Dendritic cell treated with granulocyte-macrophage colony-stimulating factor and Interleukin-4, amounts not matched to agents 40 ng/mL and 50 ng/mL, for 4 days (primary cell): ENCODE measurements at regions of chr9 and their contacts with region 1.

Region 1: GRCh38 chr9:93108291-93109041 is 12.4 kb downstream of the CARD19 start:
- H3K4me3 Mint-ChIP-seq: no peak overlapping the region
- H3K27ac Mint-ChIP-seq: peak overlapping the region; percentile 90
- H3K4me1 Mint-ChIP-seq: peaks cover 86% of the 10 kb centered on the region
- H3K27me3 Mint-ChIP-seq: no peaks in the 10 kb centered on the region

Region 2: DNA sequence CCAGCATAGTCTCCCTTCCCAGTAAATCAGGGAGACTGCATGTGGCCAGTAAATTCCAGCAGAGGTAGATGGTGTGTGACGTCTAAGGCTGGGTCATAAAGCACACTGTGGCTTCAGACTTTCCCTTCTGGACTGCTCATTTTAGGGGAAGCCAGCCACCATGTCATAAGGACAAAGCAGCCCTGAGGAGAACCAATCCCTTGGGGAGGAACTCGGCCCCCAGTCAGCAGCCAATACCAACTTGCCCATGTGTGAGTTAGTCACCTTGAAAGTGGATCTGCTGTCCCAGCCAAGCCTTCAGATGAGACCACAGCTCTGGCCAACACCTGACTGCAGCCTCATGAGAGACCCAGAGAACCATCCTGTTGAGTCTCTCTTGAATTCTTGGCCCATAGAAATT is 40.3 kb after region 1 on chr9:
- intact Hi-C with region 1: loop called (anchors 2 kb)
- H3K4me3 Mint-ChIP-seq: no peak overlapping the region
- H3K27ac Mint-ChIP-seq: peak overlapping the region; percentile 81
- H3K4me1 Mint-ChIP-seq: peaks cover 41% of the 10 kb centered on the region
- H3K27me3 Mint-ChIP-seq: peaks cover 7% of the 10 kb centered on the region

Region 3: GRCh38 chr9:93276968-93277367 is 168.5 kb after region 1 on chr9:
- intact Hi-C with region 1: no loop called
- H3K4me3 Mint-ChIP-seq: no peak overlapping the region
- H3K27ac Mint-ChIP-seq: no peak overlapping the region
- H3K4me1 Mint-ChIP-seq: no peaks in the 10 kb centered on the region
- H3K27me3 Mint-ChIP-seq: peaks cover 45% of the 10 kb centered on the region

Region 4: DNA sequence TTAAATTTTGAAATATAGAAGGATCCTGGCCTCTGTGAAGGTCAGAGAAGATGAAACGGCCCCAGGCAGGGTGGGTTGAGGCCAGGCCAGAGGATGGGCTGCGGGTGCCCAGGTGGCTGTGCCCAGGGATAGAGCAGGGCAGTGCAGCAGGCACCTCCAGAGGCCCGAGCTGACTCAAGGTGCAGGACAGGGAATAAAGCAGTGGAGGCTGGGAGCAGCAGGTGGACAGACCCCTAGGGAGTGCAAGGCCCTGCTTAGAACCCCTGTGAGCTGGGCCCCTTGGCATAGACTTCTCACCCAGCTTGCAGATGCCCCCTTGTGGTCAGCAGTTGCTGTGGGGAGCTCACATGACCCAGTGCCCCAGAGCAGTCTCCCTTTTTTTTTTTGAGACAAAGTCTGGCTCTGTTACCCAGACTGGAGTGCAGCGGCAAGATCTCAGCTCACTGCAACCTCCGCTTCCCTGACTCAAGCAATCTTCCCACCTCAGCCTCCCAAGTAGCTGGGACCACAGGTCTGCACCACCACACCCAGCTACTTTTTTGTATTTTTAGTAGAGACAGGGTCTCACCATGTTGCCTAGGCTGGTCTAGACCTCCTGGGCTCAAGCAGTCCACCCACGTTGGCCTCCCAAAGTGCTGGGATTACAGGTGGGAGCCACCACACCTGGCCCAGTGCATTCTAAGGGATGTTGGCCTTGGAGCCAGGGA is 194.2 kb after region 1 on chr9:
- intact Hi-C with region 1: loop called (anchors 1 kb)
- H3K4me3 Mint-ChIP-seq: no peak overlapping the region
- H3K27ac Mint-ChIP-seq: peak overlapping the region; percentile 69
- H3K4me1 Mint-ChIP-seq: peaks cover 11% of the 10 kb centered on the region
- H3K27me3 Mint-ChIP-seq: peaks cover 16% of the 10 kb centered on the region

Region 5: GRCh38 chr9:93566408-93567270 is 458.2 kb after region 1 on chr9:
- intact Hi-C with region 1: loop called (anchors 5 kb)
- H3K4me3 Mint-ChIP-seq: peak overlapping the region; percentile 76
- H3K27ac Mint-ChIP-seq: peak overlapping the region; percentile 91
- H3K4me1 Mint-ChIP-seq: peaks cover 41% of the 10 kb centered on the region
- H3K27me3 Mint-ChIP-seq: no peaks in the 10 kb centered on the region